ENCODE measurements at regions of chr3 and their contacts with region 1.

Region 1: GRCh38 chr3:115147329-115148141 is 447 bp upstream of the ZBTB20 start:
- DNase-seq: peak; percentile 99
- H3K4me3 ChIP-seq: peak overlapping the region; percentile 91
- H3K27ac ChIP-seq: peak overlapping the region; percentile 64
- H3K4me1 ChIP-seq: peaks cover 17% of the 10 kb centered on the region
- CTCF ChIP-seq: no peak

Region 2: GRCh38 chr3:115099986-115100571 is 47.5 kb before region 1 on chr3:
- CTCF ChIA-PET with region 1: no interaction called
- POLR2A ChIA-PET with region 1: interaction called, 4 read pairs
- intact Hi-C with region 1: loop called (anchors 1 kb)
- DNase-seq: peak; percentile 53
- H3K4me3 ChIP-seq: peak overlapping the region; percentile 54
- H3K27ac ChIP-seq: no peak overlapping the region
- H3K4me1 ChIP-seq: peaks cover 6% of the 10 kb centered on the region
- CTCF ChIP-seq: no peak

Region 3: DNA sequence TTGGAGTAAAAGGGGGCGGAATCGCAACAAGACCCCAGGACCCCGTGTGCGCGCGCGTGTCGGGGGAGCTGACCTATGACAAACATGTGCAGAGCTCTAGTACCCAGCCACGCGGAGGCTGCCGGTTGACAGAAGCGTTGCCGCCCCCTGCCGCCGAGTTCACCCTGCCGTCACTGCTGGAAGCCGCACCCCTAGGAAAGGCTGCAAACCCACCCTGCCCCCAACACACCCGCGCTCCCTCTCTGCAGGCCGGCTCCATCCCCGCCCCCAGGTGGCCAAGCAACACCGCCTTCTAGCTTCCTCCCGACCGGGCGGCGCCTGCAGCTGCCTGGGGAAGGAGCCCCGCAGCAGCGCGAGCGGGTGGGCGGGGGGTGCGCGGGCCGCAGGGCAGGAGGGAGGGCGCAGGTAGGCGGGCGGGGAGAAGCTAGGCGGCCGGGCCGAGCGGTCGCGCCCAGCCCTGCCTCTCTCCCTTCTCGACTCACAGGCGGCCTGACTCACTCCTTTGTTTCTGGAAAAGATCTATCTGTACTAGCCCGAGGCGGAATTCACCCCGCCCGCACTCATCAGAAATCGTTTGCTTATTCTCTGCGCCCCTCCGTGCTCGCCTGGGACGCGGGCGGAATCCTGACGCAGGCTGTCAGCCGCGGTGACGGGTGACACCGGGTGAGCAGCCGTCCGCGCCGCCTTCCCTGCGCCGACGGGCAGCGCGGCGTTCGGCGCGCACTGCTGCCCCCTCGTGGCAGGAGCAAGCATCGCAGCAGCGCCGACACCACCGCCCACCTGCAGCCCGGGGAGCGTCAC is 636.6 kb after region 1 on chr3:
- CTCF ChIA-PET with region 1: interaction called, 6 read pairs
- POLR2A ChIA-PET with region 1: interaction called, 4 read pairs
- intact Hi-C with region 1: loop called (anchors 2 kb)
- DNase-seq: peak; percentile 84
- H3K4me3 ChIP-seq: peak overlapping the region; percentile 67
- H3K27ac ChIP-seq: peak overlapping the region; percentile 65
- H3K4me1 ChIP-seq: no peaks in the 10 kb centered on the region
- CTCF ChIP-seq: peak; percentile 90